ENCODE measurements at regions of chr9 and their contacts with region 1.

Region 1: DNA sequence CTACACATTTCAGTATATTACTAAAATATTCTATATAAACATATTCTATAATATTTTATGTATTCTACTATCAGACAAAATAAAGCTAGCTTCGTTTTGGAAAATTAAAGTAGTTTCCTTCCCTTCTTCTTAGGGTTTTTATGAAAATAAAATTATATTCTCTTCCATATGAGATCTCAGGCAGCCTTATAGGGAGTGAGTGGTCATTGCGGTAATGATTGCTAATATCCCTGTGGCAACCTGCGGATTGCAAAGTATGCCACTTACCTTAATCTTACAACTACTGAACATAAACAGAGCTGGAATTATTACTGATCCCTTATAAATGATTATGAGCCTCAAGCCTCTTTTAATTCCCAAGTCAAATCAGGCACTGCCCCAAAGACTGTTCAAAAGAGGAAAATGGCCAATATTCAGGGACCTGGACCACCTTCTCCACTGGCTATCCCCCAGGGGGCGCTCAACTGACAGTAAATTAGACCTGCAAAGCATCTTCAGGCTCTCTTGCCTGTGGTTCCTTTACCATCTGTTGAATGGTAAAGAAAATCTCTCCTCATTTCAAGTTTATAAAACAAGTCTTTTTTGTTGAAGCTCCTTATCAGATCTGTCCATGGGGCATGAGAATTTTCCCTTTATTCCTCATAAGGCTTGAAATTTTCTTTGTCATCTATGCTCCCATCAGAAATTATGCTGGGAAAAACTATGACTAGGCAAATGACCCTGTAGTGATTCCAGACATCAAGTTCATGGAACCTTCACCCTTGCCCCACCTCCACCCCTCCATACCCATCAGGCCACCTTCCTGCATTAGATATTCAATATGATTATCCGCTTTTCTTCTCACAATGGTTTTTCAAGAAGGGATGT is 163.9 kb downstream of the CEMIP2 start:
- DNase-seq: peak; percentile 46
- ATAC-seq: peak; percentile 78
- H3K4me3 Mint-ChIP-seq: no peak overlapping the region
- H3K27ac Mint-ChIP-seq: no peak overlapping the region
- H3K4me1 Mint-ChIP-seq: peaks cover 4% of the 10 kb centered on the region
- H3K27me3 Mint-ChIP-seq: no peaks in the 10 kb centered on the region
- CTCF ChIP-seq: peak; percentile 59

Region 2: DNA sequence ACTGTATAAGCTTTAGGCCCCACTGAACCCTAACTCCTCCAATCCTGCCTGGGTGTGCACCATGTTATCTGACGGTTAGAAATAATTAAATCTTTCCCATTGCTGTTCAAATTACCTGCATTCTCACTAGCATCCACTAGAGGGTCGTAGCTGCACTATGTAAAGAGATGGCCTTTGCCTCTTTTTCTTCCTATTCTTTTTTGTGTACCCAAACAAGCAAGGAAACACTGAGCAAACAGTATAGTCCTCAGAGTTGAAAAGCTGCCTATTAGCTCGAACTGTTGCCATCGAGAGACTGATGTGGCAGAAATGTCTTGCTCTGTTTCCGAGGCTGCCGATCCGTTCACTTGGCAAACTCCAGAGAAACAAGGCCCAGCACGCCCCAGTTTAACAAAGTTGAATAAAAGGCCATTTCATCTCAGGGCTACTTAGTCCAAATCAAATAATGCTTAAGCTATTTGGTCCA is 319.2 kb before region 1 on chr9:
- CTCF ChIA-PET with region 1: no interaction called
- POLR2A ChIA-PET with region 1: no interaction called
- intact Hi-C with region 1: loop called (anchors 5 kb)
- DNase-seq: no peak
- ATAC-seq: peak; percentile 61
- H3K4me3 Mint-ChIP-seq: no peak overlapping the region
- H3K27ac Mint-ChIP-seq: no peak overlapping the region
- H3K4me1 Mint-ChIP-seq: no peaks in the 10 kb centered on the region
- H3K27me3 Mint-ChIP-seq: peaks cover 2% of the 10 kb centered on the region
- CTCF ChIP-seq: no peak

Region 3: GRCh38 chr9:71614409-71615010 is 10.1 kb after region 1 on chr9:
- CTCF ChIA-PET with region 1: interaction called, 13 read pairs
- POLR2A ChIA-PET with region 1: no interaction called
- intact Hi-C with region 1: no loop called
- DNase-seq: no peak
- ATAC-seq: no peak
- H3K4me3 Mint-ChIP-seq: no peak overlapping the region
- H3K27ac Mint-ChIP-seq: no peak overlapping the region
- H3K4me1 Mint-ChIP-seq: no peaks in the 10 kb centered on the region
- H3K27me3 Mint-ChIP-seq: no peaks in the 10 kb centered on the region
- CTCF ChIP-seq: no peak

Region 4: GRCh38 chr9:71716138-71716909 is 111.9 kb after region 1 on chr9:
- CTCF ChIA-PET with region 1: interaction called, 24 read pairs
- POLR2A ChIA-PET with region 1: no interaction called
- intact Hi-C with region 1: loop called (anchors 1 kb)
- DNase-seq: no peak
- ATAC-seq: no peak
- H3K4me3 Mint-ChIP-seq: no peak overlapping the region
- H3K27ac Mint-ChIP-seq: no peak overlapping the region
- H3K4me1 Mint-ChIP-seq: no peaks in the 10 kb centered on the region
- H3K27me3 Mint-ChIP-seq: no peaks in the 10 kb centered on the region
- CTCF ChIP-seq: peak; percentile 91

Region 5: GRCh38 chr9:71806901-71807307 is 202.5 kb after region 1 on chr9:
- CTCF ChIA-PET with region 1: no interaction called
- POLR2A ChIA-PET with region 1: no interaction called
- intact Hi-C with region 1: loop called (anchors 2 kb)
- DNase-seq: no peak
- ATAC-seq: peak; percentile 96
- H3K4me3 Mint-ChIP-seq: no peak overlapping the region
- H3K27ac Mint-ChIP-seq: peak overlapping the region; percentile 57
- H3K4me1 Mint-ChIP-seq: peaks cover 16% of the 10 kb centered on the region
- H3K27me3 Mint-ChIP-seq: no peaks in the 10 kb centered on the region
- CTCF ChIP-seq: peak; percentile 21

Region 6: GRCh38 chr9:71878327-71879274 is 274.2 kb after region 1 on chr9:
- CTCF ChIA-PET with region 1: no interaction called
- POLR2A ChIA-PET with region 1: no interaction called
- intact Hi-C with region 1: no loop called
- DNase-seq: no peak
- ATAC-seq: no peak
- H3K4me3 Mint-ChIP-seq: no peak overlapping the region
- H3K27ac Mint-ChIP-seq: no peak overlapping the region
- H3K4me1 Mint-ChIP-seq: peaks cover 7% of the 10 kb centered on the region
- H3K27me3 Mint-ChIP-seq: no peaks in the 10 kb centered on the region
- CTCF ChIP-seq: no peak

Region 7: DNA sequence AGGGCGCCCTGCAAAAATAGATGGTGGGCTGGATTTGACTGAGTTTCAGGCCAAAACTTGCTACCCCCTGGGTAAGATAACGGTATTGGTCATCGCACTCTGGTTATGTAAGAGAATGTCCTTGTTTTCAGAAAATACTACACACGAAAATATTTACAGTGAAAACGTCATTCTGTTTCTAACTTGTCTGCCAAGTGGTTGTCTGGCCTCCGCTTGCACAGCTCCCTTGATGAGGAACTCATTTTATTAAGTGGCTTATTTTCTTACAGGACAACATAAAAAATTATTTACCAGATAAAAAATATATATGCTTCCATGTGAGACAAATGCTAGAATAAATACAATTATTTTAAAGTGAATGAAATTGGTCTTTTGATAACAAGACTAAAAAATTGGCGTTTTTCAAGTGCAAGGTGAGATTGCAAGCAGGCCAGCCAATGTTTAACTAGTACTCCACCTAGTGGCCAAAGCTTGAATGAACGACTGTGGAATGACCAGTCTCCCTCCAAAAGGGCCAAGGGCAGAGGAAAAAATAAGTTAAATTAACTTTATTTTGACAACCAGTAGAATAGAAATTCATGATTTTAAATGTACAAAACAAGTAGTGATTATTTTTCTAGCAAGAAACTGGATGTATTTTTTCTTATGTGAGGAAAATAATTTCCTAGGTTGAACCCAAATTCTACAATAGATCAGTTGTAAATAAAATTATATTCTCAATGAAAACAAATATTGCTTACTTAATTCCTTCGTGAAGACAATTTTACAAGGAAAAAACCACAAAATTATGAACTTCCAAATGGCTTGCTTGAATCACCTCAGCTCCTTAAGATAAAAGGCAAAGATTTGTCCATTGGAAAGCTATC is 667.4 kb after region 1 on chr9:
- CTCF ChIA-PET with region 1: no interaction called
- POLR2A ChIA-PET with region 1: no interaction called
- intact Hi-C with region 1: loop called (anchors 1 kb)
- DNase-seq: no peak
- ATAC-seq: peak; percentile 62
- H3K4me3 Mint-ChIP-seq: no peak overlapping the region
- H3K27ac Mint-ChIP-seq: no peak overlapping the region
- H3K4me1 Mint-ChIP-seq: no peaks in the 10 kb centered on the region
- H3K27me3 Mint-ChIP-seq: peaks cover 3% of the 10 kb centered on the region
- CTCF ChIP-seq: no peak

Measured in activated B cell treated with CpG ODN at 0.5 μM for 24 hours (primary cell).